ENCODE measurements at regions of chr7 and their contacts with region 1.

Region 1: GRCh38 chr7:103317016-103317415 is 19.8 kb downstream of the PMPCB start:
- DNase-seq: no peak
- ATAC-seq: peak in 1 of 8 donors; percentile 65
- H3K4me3 ChIP-seq: no peak overlapping the region
- H3K27ac ChIP-seq: peak overlapping the region in 2 of 10 donors; percentile 11 to 25
- H3K4me1 ChIP-seq: peaks cover 0 to 8% (median 0%) of the 10 kb centered on the region in 9 donors
- H3K27me3 ChIP-seq: no peaks in the 10 kb centered on the region
- CTCF ChIP-seq: no peak

Region 2: DNA sequence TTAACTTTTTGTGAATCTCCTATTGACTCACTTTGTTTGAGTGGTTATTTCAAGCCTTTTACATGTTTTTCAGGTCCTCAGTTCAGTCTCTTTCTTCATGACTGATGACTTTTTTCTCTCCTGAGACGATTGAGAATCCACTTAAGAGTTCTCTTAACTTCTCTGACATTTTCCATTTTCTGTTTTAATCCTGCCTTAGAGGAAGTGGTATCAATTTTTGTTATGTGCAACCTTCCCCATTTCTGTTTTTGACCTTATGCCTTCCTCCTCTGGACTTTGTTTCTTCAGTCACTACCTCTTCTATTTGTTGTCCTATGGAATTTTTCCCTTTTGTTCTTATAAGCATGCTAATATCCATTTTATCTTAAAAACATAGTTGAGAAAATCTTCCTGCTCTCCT is 32.8 kb after region 1 on chr7:
- intact Hi-C with region 1: loop called in 1 of 10 experiments (anchors 5 kb)
- DNase-seq: no peak
- ATAC-seq: no peak
- H3K4me3 ChIP-seq: peak overlapping the region in 1 of 10 donors; percentile 84
- H3K27ac ChIP-seq: peak overlapping the region in 1 of 10 donors; percentile 35
- H3K4me1 ChIP-seq: peaks cover 4 to 59% (median 50%) of the 10 kb centered on the region in 9 donors
- H3K27me3 ChIP-seq: no peaks in the 10 kb centered on the region
- CTCF ChIP-seq: no peak

Region 3: DNA sequence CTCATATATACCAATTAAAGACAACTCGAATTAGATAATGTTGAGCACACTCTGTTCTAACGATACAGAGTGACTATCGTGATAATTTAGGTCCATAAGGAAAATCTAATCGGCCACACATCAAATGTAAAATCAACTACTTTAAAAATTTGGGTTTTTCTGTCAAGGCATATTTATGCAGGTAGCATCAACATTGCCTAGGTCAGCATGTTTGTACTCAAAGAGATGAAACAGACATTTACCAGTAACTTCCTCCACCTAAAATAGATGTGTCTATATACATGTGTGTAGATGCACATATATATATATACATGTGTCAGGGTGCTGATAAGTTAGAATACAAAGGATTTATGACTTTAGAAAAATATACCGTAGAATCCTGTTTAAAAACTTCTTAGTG is 52.4 kb after region 1 on chr7:
- intact Hi-C with region 1: loop called in 1 of 10 experiments (anchors 5 kb)
- DNase-seq: no peak
- ATAC-seq: no peak
- H3K4me3 ChIP-seq: no peak overlapping the region
- H3K27ac ChIP-seq: no peak overlapping the region
- H3K4me1 ChIP-seq: no peaks in the 10 kb centered on the region
- H3K27me3 ChIP-seq: no peaks in the 10 kb centered on the region
- CTCF ChIP-seq: no peak

Measured in heart right ventricle (tissue), 16 donors.